GM18951 (cell line): ENCODE measurements at regions of chr18 and their contacts with region 1.

Region 1: DNA sequence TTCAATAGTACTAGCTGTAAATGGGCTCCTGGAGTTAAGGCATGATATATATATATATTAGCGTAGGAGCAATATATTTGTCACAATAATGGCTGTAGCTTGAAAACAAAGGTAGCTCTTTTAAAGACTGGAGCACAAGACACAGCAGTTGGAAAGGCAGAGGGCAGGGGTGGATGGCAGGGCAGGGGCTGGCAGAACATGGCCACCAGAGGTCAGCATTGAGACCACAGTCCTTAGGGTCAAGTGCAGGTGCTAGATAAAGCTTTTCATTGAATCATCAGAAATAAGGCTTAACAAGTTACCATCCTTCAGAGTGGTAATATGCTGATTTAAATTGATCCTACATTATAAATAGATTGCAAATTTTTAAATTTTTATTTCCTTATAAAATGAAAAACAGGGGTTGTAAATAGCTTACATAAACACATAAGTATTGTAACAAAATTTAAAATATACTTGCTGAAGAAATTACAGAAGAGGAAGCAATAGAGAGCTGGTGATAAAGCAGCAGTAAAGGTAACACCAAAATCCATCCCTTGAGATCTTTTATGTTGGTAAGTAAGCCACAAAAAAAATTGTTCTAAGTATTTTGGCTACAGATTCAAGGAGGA is 161.2 kb upstream of the PIEZO2 start:
- POLR2A ChIP-seq: no peak

Region 2: DNA sequence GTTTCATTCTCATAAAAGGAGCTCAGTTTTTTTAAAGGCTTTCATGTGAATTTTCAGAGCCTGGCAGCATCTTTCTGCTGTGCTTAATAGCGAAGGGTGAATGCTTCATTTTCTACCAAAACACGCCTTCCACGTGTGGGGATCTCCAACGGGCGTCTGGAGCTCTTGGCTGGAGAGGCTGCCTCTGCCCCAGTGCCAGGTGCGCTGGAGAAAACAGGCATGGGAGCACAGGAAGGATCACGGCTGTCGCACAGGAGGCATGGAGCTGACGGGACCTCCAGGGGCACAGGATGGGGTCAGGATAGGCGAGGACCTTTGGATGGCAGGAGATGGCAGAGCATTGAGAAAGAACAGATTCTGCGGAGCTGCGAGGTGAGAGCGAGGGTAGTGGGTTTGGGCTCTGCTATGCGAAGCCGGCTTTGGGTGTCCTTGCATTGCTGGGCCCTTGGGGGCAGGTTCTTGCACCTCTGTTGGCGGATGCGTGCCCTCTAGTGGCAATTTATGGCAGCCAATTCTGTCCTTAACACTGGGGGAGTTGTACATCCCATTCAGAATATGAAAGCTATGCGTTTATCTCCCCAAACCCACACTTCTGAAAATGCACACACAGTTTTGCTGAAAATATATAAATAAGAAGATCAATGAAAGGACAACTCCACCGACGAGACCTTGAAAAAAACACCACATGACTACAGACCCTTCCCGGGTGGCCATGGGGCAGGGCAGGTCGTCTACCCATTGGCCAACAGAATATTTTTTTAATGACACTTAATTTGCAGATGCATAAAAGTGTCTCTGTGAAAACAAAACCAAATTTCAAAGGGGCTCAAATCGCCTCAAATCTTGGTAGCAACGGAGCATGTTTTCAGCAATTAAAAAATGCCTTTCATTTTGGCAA is 208.5 kb after region 1 on chr18:
- in situ Hi-C with region 1: loop called (anchors 25 kb)
- POLR2A ChIP-seq: no peak

Region 3: DNA sequence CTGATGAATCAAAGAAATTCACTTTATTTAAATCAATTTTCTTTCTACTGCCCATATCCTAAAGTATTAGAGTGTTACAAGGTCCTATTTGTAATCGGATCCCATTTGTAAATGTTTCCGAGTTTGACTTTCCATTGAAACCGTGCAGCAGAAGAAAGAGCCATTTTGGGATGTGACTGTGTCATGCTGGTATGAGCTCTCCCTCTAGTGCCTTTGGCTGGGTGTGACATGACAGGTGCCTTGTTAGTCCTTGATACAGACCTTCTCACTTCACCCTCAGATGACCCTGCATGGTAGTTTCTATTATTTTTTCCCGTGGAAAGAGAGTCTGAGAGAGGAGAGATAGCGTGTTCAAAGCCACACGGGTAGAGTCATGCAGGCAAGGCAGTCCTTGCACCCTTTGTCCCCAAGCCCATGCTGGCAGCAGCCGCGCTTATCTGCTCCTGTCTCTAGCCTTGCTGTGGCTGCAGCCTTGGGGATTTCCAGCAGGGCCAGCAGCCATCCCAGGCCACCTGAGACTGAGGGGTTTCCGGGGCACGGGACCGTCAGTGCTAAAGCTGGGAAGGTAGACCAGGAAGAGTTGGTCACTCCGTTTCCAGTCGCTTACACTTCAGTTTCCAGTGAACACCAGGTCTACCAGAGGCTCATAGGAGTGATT is 562.0 kb after region 1 on chr18:
- in situ Hi-C with region 1: no loop called
- POLR2A ChIP-seq: no peak